Sigmoid colon (tissue), 7 donors: ENCODE measurements at regions of chr12 and their contacts with region 1.

Region 1: DNA sequence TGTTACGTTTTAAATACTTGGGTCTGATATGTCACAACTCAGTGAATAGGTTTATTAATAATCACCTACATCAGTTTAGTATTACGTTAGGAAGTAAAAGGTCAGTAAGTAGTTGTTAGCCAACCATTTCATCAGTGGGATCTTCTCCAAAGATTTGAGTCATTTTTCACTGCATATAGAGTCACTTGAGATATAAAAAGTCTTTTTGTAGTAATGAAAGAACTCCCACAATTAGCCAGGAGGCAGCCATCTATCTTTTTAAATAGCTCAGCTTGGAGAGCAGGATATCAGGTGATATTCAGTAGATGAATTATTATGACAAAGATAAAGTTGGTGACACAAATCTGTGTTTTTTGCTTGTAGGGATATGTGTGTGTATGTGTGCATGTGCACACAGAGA is 309.3 kb downstream of the PDZRN4 start:
- DNase-seq: no peak
- H3K4me3 ChIP-seq: no peak overlapping the region
- H3K27ac ChIP-seq: no peak overlapping the region
- H3K4me1 ChIP-seq: no peaks in the 10 kb centered on the region
- H3K27me3 ChIP-seq: no peaks in the 10 kb centered on the region
- CTCF ChIP-seq: no peak
- EP300 ChIP-seq: no peak
- POLR2A ChIP-seq: no peak

Region 2: DNA sequence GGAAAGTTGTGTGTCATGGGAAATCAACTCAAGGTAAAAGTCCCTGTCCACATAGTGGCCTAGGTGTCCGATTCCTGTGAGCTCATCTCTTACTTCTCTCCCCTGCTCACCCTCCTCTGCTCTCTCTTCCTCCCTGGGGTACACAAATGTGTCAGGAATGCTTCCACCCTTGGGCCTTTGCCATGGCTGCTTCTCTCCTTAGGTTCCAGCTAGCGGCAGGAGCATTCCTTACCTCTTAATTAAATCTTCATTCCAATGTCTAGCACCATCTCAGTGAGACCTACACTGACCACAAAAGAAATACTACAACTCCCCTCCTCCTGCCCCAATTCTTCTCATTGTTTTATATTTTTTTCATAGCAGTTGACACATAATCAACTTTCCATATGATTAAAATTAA is 10.7 kb before region 1 on chr12:
- intact Hi-C with region 1: loop called (anchors 1 kb)
- DNase-seq: no peak
- H3K4me3 ChIP-seq: no peak overlapping the region
- H3K27ac ChIP-seq: no peak overlapping the region
- H3K4me1 ChIP-seq: peaks cover 0 to 6% (median 5%) of the 10 kb centered on the region in 4 donors
- H3K27me3 ChIP-seq: no peaks in the 10 kb centered on the region
- CTCF ChIP-seq: no peak
- EP300 ChIP-seq: no peak
- POLR2A ChIP-seq: no peak